Heart left ventricle (tissue), 16 donors: ENCODE measurements at regions of chr11 and their contacts with region 1.

Region 1: DNA sequence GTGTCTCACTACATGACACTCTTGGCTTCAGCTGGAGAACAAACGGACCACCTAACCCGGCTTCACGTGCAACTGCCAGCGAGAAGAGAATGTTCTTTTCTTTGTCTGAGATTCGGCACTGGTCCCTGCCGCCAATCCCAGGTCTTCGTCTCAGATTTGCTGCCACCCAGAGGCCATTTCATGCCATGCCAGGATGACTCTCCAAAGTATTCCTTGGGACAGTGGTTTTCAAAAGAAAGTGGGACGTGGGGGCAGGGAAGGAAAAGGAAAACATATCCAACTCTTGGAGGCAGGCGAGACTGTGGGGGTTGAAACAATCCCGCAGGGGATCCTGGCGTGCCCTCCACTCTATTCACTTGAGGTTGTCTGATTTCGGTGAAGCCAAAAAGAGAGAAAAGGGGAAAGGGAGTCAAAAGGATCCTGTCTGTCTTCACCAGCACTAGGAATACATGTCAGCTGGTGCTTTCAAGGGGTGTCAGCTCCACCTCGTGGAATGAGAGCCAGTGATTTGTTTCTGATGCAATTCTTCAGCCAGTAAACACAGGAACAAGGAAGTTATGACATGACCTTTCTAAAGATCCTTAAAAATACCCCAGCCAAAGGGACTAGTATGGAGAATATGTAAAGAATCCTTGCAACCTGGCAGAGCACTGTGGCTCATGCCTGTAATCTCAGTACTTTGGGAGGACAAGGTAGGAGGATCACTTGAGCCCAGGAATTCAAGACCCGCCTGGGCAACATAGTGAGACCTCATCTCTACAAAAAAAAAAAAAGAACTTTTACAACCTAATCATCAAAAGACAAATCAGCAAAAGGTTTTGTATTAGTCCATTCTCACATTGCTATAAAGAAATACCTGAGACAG is 41.0 kb upstream of the APLNR start:
- DNase-seq: peak; percentile 72 to 80 (median 74)
- ATAC-seq: peak; percentile 13 to 81 (median 74)
- H3K4me3 ChIP-seq: peak overlapping the region in 2 of 12 donors; percentile 20 to 27
- H3K27ac ChIP-seq: peak overlapping the region; percentile 40 to 94 (median 80)
- H3K4me1 ChIP-seq: peaks cover 0 to 39% (median 24%) of the 10 kb centered on the region in 12 donors
- H3K27me3 ChIP-seq: no peaks in the 10 kb centered on the region
- CTCF ChIP-seq: peak; percentile 60 to 90 (median 80)
- POLR2A ChIP-seq: no peak

Region 2: DNA sequence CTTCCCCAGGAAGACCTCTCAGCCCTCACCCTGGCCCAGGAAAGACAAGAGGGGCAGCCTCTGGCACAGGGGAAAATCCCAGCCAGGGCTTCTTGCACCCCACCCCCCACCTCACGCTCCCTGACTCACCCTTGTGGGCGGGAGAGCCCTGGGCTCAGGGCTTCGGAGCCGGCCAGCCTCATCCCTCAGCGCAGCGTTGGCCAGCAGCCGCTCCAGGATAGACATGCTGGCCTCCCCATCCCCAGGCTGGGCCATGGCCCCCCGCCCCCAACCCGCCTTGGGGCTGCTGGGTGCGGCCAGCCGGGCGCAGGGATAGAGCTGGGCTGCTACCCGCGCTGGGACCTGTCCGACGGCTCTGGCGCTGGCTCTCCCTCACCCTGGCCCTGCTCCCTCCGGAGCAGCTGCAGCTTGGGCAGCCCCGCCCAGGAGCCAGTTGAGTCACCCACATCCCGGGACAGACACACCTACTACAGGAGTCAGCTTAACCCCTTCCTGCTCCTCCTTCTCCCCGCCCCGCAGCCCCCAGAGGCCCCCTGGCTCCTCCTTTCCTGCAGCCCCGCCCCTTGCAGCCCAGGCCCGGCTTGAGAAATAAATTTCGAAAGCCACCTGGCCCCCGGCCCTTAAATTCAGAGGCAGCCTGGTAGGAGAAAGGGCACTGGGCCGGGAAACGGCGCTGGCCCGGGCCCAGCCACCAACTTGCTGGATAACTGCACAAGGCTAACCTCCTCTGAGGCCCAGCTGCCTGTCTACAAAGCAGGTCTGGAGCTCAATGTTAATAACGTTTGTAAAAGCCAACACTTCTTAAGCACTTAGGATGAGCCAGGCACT is 33.2 kb after region 1 on chr11:
- intact Hi-C with region 1: no loop called
- DNase-seq: peak; percentile 89 to 96 (median 93)
- ATAC-seq: peak; percentile 89 to 96 (median 96)
- H3K4me3 ChIP-seq: peak overlapping the region; percentile 15 to 67 (median 56)
- H3K27ac ChIP-seq: peak overlapping the region in 11 of 12 donors; percentile 69 to 88 (median 82)
- H3K4me1 ChIP-seq: peaks cover 0 to 82% (median 72%) of the 10 kb centered on the region in 12 donors
- H3K27me3 ChIP-seq: no peaks in the 10 kb centered on the region
- CTCF ChIP-seq: no peak
- POLR2A ChIP-seq: peak in 1 of 2 donors; percentile 75

Region 3: GRCh38 chr11:57324886-57325734 is 47.0 kb after region 1 on chr11 and contains the start of gene TNKS1BP1:
- intact Hi-C with region 1: loop called in 2 of 10 experiments (anchors 5 kb)
- DNase-seq: peak; percentile 97 to 98 (median 98)
- ATAC-seq: peak; percentile 84 to 90 (median 88)
- H3K4me3 ChIP-seq: peak within 1 kb of the TSS; percentile 67 to 89 (median 75)
- H3K27ac ChIP-seq: peak within 1 kb of the TSS; percentile 88 to 98 (median 94)
- H3K4me1 ChIP-seq: peaks cover 4 to 55% (median 32%) of the 10 kb centered on the region in 12 donors
- H3K27me3 ChIP-seq: no peaks in the 10 kb centered on the region
- CTCF ChIP-seq: peak in 1 of 12 donors; percentile 11
- POLR2A ChIP-seq: peak; percentile 9 to 90
- total RNA-seq, gene TNKS1BP1: 25.3 to 68.3 (median 33.1) TPM